ENCODE measurements at regions of chr2 and their contacts with region 1.

Region 1: GRCh38 chr2:224778474-224778877 is 62.3 kb upstream of the CCDC195 start:
- DNase-seq: peak; percentile 57
- CTCF ChIP-seq: peak; percentile 86

Region 2: GRCh38 chr2:224764565-224765236 is 13.8 kb before region 1 on chr2:
- CTCF ChIA-PET with region 1: interaction called, 32 read pairs
- POLR2A ChIA-PET with region 1: no interaction called
- DNase-seq: peak; percentile 18
- CTCF ChIP-seq: no peak

Region 3: DNA sequence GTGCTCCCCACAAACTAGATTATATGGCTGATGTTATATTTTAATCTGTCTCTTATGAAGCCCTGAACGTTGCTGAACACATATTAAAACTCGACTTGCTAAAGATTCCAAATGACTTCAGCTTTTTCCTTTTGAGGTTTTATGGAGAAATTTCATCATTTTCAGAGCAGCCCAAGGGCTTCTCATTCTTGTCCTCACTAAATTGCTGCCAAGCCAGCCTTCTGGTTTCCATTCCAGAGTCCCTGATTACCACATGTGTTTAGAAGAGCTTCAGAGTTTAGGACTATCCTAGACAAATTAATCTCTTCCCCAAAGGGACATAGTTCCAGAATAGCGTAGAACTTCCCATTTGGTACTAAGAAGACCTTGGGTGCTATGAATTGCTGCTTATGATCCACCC is 15.5 kb after region 1 on chr2:
- CTCF ChIA-PET with region 1: interaction called, 25 read pairs
- POLR2A ChIA-PET with region 1: no interaction called
- DNase-seq: no peak
- CTCF ChIP-seq: no peak

Region 4: GRCh38 chr2:226600184-226600583 is 1821.7 kb after region 1 on chr2:
- CTCF ChIA-PET with region 1: no interaction called
- POLR2A ChIA-PET with region 1: no interaction called
- DNase-seq: no peak
- CTCF ChIP-seq: no peak

Measured in GM10248 (cell line).